WTC11 (cell line): ENCODE measurements at regions of chr3 and their contacts with region 1.

Region 1: GRCh38 chr3:123314359-123315270 is 112.9 kb downstream of the SEC22A start:
- DNase-seq: peak; percentile 89
- ATAC-seq: peak; percentile 88
- H3K4me3 Mint-ChIP-seq: peak overlapping the region; percentile 73
- H3K27ac Mint-ChIP-seq: peak overlapping the region; percentile 99
- H3K4me1 Mint-ChIP-seq: peaks cover 93% of the 10 kb centered on the region
- H3K27me3 Mint-ChIP-seq: no peaks in the 10 kb centered on the region
- CTCF ChIP-seq: no peak

Region 2: DNA sequence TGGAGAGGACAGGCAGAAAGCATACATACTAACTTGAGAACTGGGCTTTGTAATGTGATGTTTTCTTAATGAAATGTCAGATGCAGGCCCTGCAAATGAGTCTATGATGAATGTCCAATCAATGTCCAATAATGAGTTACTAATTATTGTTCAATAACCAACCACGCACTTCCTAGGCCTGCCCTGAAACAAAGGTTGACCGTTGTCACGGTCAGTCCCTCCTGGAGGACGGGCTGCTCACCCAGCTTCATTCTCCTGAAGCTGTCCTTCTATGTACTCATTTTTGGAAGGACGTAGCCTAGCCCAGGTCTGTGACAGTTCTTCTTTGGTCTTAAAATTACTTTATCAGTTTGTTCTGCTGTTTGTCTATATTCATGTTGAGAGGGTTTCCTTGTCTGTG is 256.1 kb before region 1 on chr3:
- CTCF ChIA-PET with region 1: no interaction called
- POLR2A ChIA-PET with region 1: no interaction called
- DNase-seq: no peak
- ATAC-seq: no peak
- H3K4me3 Mint-ChIP-seq: no peak overlapping the region
- H3K27ac Mint-ChIP-seq: no peak overlapping the region
- H3K4me1 Mint-ChIP-seq: no peaks in the 10 kb centered on the region
- H3K27me3 Mint-ChIP-seq: peaks cover 9% of the 10 kb centered on the region
- CTCF ChIP-seq: no peak

Region 3: DNA sequence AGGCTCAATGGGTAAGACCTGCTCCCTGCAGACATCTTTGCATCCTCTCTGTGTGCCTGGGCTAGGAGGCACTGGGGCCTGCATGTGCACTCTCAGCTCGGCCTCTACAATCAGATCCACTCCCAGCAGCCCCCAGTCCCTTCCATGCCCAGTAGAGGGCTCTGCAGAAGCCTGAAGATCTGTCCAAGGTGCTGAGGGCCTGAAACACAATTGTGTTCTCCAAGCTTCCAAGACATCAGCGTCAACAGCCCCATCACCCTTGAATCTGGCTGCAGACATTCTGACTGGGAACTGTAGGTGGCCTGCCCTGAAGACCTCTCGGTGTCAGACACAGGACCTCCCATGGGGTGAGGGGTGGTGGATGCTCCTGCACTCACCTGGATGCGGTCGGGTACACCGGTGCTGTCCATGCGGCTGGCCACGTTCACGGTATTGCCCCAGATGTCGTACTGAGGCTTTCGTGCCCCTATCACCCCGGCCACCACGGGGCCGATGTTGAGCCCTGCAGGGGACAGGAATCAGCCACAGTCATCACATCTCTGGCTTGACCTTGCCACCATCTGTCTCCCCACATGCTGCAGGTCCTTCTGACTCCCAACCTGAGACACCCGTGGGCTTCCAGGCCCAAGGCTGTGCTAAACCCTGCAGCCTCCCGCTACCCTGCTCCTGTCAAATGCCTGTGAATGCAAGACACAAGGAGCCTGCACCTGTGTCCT is 28.1 kb before region 1 on chr3:
- CTCF ChIA-PET with region 1: interaction called, 27 read pairs
- POLR2A ChIA-PET with region 1: no interaction called
- DNase-seq: peak; percentile 82
- ATAC-seq: peak; percentile 92
- H3K4me3 Mint-ChIP-seq: no peak overlapping the region
- H3K27ac Mint-ChIP-seq: no peak overlapping the region
- H3K4me1 Mint-ChIP-seq: no peaks in the 10 kb centered on the region
- H3K27me3 Mint-ChIP-seq: no peaks in the 10 kb centered on the region
- CTCF ChIP-seq: peak; percentile 72

Region 4: GRCh38 chr3:123328851-123329635 is 14.4 kb after region 1 on chr3:
- CTCF ChIA-PET with region 1: interaction called, 24 read pairs
- POLR2A ChIA-PET with region 1: interaction called, 4 read pairs
- DNase-seq: peak; percentile 90
- ATAC-seq: peak; percentile 86
- H3K4me3 Mint-ChIP-seq: no peak overlapping the region
- H3K27ac Mint-ChIP-seq: no peak overlapping the region
- H3K4me1 Mint-ChIP-seq: peaks cover 20% of the 10 kb centered on the region
- H3K27me3 Mint-ChIP-seq: no peaks in the 10 kb centered on the region
- CTCF ChIP-seq: peak; percentile 94

Region 5: DNA sequence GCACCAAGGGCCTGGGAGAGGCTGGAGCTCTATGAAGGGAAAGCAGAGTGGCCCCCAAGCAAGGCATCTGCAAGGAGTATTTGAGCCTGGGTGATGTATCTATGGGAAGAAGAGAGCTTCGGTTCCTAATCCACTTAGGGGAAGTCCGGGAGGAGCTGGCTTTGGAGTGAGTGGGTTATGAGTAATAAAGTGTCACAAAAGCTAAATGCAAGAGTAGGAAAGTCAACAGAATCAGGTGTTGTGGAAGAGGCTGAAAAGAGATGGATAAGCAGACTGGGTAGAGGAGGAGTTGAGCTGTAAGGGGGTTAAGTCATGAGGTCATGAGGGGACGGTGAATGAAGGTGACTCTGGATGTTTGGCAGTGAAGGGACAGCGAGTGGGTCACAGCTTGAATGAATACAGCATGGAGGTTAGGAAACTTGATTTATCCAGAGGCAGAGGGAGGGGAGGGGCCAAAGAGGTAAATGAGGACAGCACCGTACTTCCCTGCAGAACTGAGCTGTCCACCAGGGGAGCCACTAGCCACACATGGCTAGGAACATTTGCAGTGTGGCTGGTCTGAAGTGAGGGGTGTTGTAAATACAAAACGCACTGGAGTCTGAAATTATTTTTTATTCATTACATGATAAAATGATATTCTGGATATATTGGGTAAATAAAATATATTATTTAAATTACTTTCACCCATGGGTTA is 51.0 kb after region 1 on chr3:
- CTCF ChIA-PET with region 1: interaction called, 11 read pairs
- POLR2A ChIA-PET with region 1: interaction called, 4 read pairs
- DNase-seq: peak; percentile 67
- ATAC-seq: peak; percentile 98
- H3K4me3 Mint-ChIP-seq: no peak overlapping the region
- H3K27ac Mint-ChIP-seq: no peak overlapping the region
- H3K4me1 Mint-ChIP-seq: peaks cover 4% of the 10 kb centered on the region
- H3K27me3 Mint-ChIP-seq: peaks cover 9% of the 10 kb centered on the region
- CTCF ChIP-seq: peak; percentile 39; the same call in 1 of the 2 replicates

Region 6: GRCh38 chr3:123375014-123375940 is 60.7 kb after region 1 on chr3:
- CTCF ChIA-PET with region 1: interaction called, 11 read pairs
- POLR2A ChIA-PET with region 1: no interaction called
- DNase-seq: peak; percentile 46
- ATAC-seq: peak; percentile 66
- H3K4me3 Mint-ChIP-seq: no peak overlapping the region
- H3K27ac Mint-ChIP-seq: no peak overlapping the region
- H3K4me1 Mint-ChIP-seq: no peaks in the 10 kb centered on the region
- H3K27me3 Mint-ChIP-seq: no peaks in the 10 kb centered on the region
- CTCF ChIP-seq: no peak

Region 7: DNA sequence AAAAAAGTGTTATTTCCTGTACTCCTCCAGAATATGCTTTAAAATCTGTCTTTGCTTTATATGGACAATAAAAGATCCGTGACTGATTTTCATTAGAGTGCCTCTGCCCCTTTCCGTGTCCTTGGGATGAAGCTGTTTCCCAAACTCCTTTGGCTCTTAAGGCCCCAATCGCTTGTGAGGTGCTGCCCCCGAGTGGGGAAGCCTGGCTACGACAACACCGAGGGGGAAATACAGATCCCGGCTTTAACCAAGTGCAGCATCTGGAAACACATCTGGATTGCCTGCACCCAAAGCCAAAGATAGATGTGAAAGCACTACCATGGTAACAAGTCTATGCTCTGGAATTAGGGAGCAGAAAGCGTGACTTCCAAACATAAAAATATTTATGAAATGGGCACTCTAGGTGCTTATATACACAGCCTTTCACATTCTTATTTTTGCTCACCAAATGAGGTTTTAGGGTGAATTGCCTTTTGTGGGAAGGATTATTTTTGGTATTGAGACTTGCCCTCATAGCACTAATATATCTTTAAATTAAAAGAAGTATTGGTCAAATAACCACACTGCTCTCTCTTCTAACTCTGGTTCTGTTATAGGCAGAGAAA is 174.9 kb after region 1 on chr3:
- CTCF ChIA-PET with region 1: interaction called, 11 read pairs
- POLR2A ChIA-PET with region 1: no interaction called
- DNase-seq: peak; percentile 86
- ATAC-seq: peak; percentile 95
- H3K4me3 Mint-ChIP-seq: no peak overlapping the region
- H3K27ac Mint-ChIP-seq: no peak overlapping the region
- H3K4me1 Mint-ChIP-seq: no peaks in the 10 kb centered on the region
- H3K27me3 Mint-ChIP-seq: no peaks in the 10 kb centered on the region; the same call in 1 of the 2 replicates
- CTCF ChIP-seq: peak; percentile 74

Region 8: GRCh38 chr3:123618768-123619484 is 304.3 kb after region 1 on chr3:
- CTCF ChIA-PET with region 1: no interaction called
- POLR2A ChIA-PET with region 1: no interaction called
- DNase-seq: no peak
- ATAC-seq: no peak
- H3K4me3 Mint-ChIP-seq: no peak overlapping the region
- H3K27ac Mint-ChIP-seq: no peak overlapping the region
- H3K4me1 Mint-ChIP-seq: peaks cover 25% of the 10 kb centered on the region
- H3K27me3 Mint-ChIP-seq: no peaks in the 10 kb centered on the region
- CTCF ChIP-seq: no peak